Activated CD4-positive, alpha-beta T cell treated with anti-CD3 and anti-CD28 coated beads, Interleukin-2, amount 10 ng/mL, durations not matched to agents 24 days and 14 days (primary cell): ENCODE measurements at regions of chr9 and their contacts with region 1.

Region 1: GRCh38 chr9:2087500-2088313 is 72.6 kb downstream of the SMARCA2 start:
- DNase-seq: peak; percentile 70
- H3K4me3 Mint-ChIP-seq: no peak overlapping the region
- H3K27ac Mint-ChIP-seq: peak overlapping the region; percentile 5
- H3K4me1 Mint-ChIP-seq: peaks cover 13% of the 10 kb centered on the region
- H3K27me3 Mint-ChIP-seq: no peaks in the 10 kb centered on the region

Region 2: DNA sequence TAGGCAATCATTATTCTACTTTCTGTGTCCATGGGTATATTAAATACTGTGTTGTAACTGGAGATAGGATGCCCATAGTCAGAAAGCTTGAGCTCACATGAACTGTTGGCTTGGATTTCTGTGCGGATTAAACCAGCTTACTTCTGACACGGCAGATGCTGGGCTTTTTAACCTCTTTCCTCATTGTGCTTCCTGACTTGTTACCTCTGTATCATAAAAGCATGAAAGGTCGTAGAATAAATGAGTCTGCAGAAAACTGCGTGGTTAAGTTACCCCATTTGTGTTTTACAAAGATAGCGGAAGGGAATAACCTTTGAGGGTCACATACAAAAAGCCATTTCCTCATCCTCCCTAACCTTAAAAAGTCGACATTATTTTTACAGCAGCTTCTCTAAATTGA is 1445.7 kb before region 1 on chr9:
- intact Hi-C with region 1: no loop called
- DNase-seq: no peak
- H3K4me3 Mint-ChIP-seq: no peak overlapping the region
- H3K27ac Mint-ChIP-seq: no peak overlapping the region
- H3K4me1 Mint-ChIP-seq: peaks cover 7% of the 10 kb centered on the region
- H3K27me3 Mint-ChIP-seq: no peaks in the 10 kb centered on the region

Region 3: DNA sequence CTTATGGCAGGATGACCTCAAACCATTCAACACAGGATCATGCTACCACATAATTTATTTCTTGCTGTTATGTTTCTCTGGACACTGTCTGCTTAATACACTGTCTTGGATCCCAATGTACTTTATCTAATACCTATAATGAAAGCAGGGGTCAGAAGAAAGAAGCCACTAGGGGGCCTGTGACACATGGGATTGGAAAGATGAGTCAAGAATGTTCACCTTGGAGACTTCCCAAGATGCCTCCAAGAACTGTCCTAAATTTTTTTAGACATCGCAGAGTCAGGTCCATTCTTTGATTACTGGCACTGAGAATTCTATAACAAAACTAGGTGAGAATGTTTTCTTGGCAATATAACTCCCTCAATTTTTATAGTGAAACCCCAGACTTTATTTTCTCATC is 378.4 kb before region 1 on chr9:
- intact Hi-C with region 1: loop called (anchors 10 kb)
- DNase-seq: peak; percentile 56
- H3K4me3 Mint-ChIP-seq: no peak overlapping the region
- H3K27ac Mint-ChIP-seq: no peak overlapping the region
- H3K4me1 Mint-ChIP-seq: no peaks in the 10 kb centered on the region
- H3K27me3 Mint-ChIP-seq: peaks cover 26% of the 10 kb centered on the region